Heart right ventricle (tissue), 16 donors: ENCODE measurements at regions of chr18 and their contacts with region 1.

Region 1: GRCh38 chr18:21038201-21038600 is 73.4 kb downstream of the ROCK1 start:
- DNase-seq: no peak
- ATAC-seq: no peak
- H3K4me3 ChIP-seq: no peak overlapping the region
- H3K27ac ChIP-seq: no peak overlapping the region
- H3K4me1 ChIP-seq: peaks cover 0 to 17% (median 3%) of the 10 kb centered on the region in 9 donors
- H3K27me3 ChIP-seq: no peaks in the 10 kb centered on the region
- CTCF ChIP-seq: no peak

Region 2: DNA sequence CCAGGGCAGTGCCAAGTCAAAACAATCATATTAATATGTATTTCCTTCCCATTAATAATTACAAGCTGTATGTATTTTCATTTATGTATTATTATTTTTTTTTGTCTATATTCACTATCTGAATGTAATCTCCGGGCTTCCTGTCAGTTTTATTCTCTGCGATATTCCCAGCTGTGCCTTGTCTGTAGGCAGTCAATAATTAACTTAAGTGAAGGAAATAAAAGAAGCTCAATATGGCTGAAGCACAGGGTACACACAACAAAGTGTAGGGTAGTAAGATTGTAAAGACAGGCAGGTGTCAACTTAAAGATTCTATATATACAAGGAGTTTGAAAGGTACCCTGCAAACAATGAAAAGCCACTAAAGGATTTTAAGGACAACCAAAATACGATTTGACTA is 49.5 kb before region 1 on chr18:
- intact Hi-C with region 1: loop called in 1 of 10 experiments (anchors 2 kb)
- DNase-seq: no peak
- ATAC-seq: no peak
- H3K4me3 ChIP-seq: no peak overlapping the region
- H3K27ac ChIP-seq: no peak overlapping the region
- H3K4me1 ChIP-seq: no peaks in the 10 kb centered on the region
- H3K27me3 ChIP-seq: no peaks in the 10 kb centered on the region
- CTCF ChIP-seq: no peak

Region 3: GRCh38 chr18:21099442-21099841 is 61.2 kb after region 1 on chr18:
- intact Hi-C with region 1: loop called in 2 of 10 experiments (anchors 5 to 10 kb)
- DNase-seq: no peak
- ATAC-seq: no peak
- H3K4me3 ChIP-seq: no peak overlapping the region
- H3K27ac ChIP-seq: no peak overlapping the region
- H3K4me1 ChIP-seq: peaks cover 0 to 68% (median 44%) of the 10 kb centered on the region in 9 donors
- H3K27me3 ChIP-seq: no peaks in the 10 kb centered on the region
- CTCF ChIP-seq: no peak

Region 4: GRCh38 chr18:21933931-21934765 is 895.9 kb after region 1 on chr18:
- intact Hi-C with region 1: loop called in 1 of 10 experiments (anchors 10 kb)
- DNase-seq: no peak
- ATAC-seq: no peak
- H3K4me3 ChIP-seq: no peak overlapping the region
- H3K27ac ChIP-seq: no peak overlapping the region
- H3K4me1 ChIP-seq: no peaks in the 10 kb centered on the region
- H3K27me3 ChIP-seq: no peaks in the 10 kb centered on the region
- CTCF ChIP-seq: no peak